ENCODE measurements at regions of chr16 and their contacts with region 1.

Region 1: DNA sequence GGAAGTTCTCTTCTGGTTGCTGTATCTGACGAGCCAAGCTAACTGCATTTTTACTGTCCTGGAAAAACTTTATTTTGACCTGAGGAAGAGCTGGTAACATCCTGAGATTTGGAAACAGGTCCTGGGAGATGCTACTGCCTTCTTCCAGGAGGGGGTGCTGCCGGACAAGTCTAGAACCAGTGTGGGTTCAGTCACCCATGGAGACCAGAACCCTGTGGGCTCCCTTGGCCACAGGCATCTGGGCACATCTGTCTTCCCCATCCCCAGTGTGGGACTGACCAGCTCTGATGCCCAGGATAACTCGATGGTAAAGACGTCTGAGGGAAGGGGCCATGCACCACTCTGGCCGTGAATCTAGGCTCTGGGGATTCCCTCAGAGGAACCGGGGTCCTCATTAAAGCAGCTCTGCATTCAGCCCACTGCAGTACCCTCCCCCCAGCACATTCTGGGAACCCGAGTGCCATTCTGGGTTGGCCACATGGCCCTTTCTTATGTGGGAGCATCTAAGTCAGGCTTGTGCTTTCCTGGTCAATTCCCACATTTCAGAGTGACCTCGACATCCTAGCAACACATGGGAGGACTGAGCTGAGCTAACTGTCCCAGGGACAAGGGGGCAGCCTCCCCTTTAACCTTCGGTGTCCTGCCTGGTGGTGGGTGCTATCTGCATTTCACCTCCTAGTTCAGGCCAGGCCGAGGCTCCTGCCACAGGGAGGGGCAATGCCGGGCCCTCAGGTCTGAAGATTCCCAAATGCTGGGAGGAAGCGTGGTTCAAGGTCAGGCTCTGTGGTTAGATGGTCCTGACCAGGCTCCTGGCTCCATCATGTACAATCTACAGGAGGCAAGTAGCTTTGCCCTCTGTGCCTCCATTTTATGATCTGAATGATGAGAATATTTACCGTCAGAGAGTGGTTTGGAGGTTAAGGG is 6.4 kb downstream of the C16orf86 start:
- DNase-seq: peak in 5 of 9 donors; percentile 36 to 59 (median 45)
- ATAC-seq: peak; percentile 42
- H3K4me3 ChIP-seq: no peak overlapping the region
- H3K4me3 Mint-ChIP-seq: no peak overlapping the region
- H3K27ac ChIP-seq: no peak overlapping the region
- H3K27ac Mint-ChIP-seq: peak overlapping the region in 4 of 9 donors; percentile 41 to 62 (median 51)
- H3K4me1 ChIP-seq: peaks cover 0 to 2% of the 10 kb centered on the region in 2 donors
- H3K4me1 Mint-ChIP-seq: peaks cover 1 to 14% (median 2%) of the 10 kb centered on the region in 7 donors
- H3K27me3 ChIP-seq: no peaks in the 10 kb centered on the region
- H3K27me3 Mint-ChIP-seq: no peaks in the 10 kb centered on the region

Region 2: DNA sequence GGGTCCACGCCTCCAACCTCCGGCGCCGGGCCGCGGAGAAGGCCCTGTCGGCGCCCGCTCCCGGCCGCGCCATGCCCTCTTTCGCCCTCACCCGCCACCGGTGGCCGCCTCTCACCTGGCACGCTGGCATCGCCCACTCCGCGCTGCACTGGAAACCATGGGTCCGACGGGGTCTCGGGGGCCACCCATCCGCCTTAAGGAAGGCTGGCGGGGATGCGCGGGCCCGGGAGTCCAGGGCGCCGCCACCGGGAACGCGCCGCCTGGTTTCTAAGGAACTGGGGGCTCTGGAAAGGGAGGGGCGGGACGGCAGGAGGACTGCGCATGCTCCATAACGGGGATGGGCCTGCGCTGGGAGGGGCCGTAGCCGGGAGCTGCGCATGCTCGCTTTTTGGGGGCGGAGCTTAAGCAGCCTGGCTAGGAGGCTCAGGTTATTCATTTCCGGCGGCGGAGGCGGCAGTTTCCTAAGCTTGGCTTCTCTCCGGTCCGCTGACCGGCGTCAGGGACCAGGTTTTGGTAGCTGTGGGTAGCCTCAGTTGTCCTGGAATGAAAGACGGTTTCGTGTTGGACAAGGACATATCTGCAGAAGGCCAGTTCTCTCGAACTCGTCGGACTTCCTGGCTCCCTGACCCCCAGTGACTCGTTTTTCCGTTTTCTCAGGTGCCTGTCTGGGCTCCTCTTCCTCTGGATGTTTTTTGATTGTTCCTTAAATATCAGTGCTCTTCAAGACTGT is 46.2 kb after region 1 on chr16 and contains the start of gene GFOD2:
- CTCF ChIA-PET with region 1: interaction called, 4 read pairs
- POLR2A ChIA-PET with region 1: interaction called, 5 read pairs
- intact Hi-C with region 1: loop called in 1 of 2 experiments (anchors 2 kb)
- DNase-seq: peak; percentile 94 to 100 (median 96)
- ATAC-seq: peak; percentile 96
- H3K4me3 ChIP-seq: peak within 1 kb of the TSS; percentile 95
- H3K4me3 Mint-ChIP-seq: peak within 1 kb of the TSS; percentile 90 to 99 (median 94)
- H3K27ac ChIP-seq: peak within 1 kb of the TSS; percentile 88
- H3K27ac Mint-ChIP-seq: peak within 1 kb of the TSS; percentile 91 to 99 (median 98)
- H3K4me1 ChIP-seq: peaks cover 15 to 16% of the 10 kb centered on the region in 2 donors
- H3K4me1 Mint-ChIP-seq: peaks cover 19 to 51% (median 39%) of the 10 kb centered on the region in 7 donors
- H3K27me3 ChIP-seq: no peaks in the 10 kb centered on the region
- H3K27me3 Mint-ChIP-seq: no peaks in the 10 kb centered on the region
- total RNA-seq, gene GFOD2: 6.3 to 13.4 (median 11.4) TPM

Region 3: GRCh38 chr16:67865316-67865715 is 192.3 kb after region 1 on chr16:
- CTCF ChIA-PET with region 1: no interaction called
- POLR2A ChIA-PET with region 1: no interaction called
- intact Hi-C with region 1: loop called (anchors 1 to 2 kb)
- DNase-seq: peak in 2 of 9 donors; percentile 18 to 19
- ATAC-seq: peak; percentile 64
- H3K4me3 ChIP-seq: no peak overlapping the region
- H3K4me3 Mint-ChIP-seq: no peak overlapping the region
- H3K27ac ChIP-seq: no peak overlapping the region
- H3K27ac Mint-ChIP-seq: peak overlapping the region in 1 of 9 donors; percentile 65
- H3K4me1 ChIP-seq: no peaks in the 10 kb centered on the region
- H3K4me1 Mint-ChIP-seq: peaks cover 4 to 16% (median 8%) of the 10 kb centered on the region in 7 donors
- H3K27me3 ChIP-seq: no peaks in the 10 kb centered on the region
- H3K27me3 Mint-ChIP-seq: no peaks in the 10 kb centered on the region

Region 4: GRCh38 chr16:67928561-67929364 is 255.8 kb after region 1 on chr16:
- CTCF ChIA-PET with region 1: no interaction called
- POLR2A ChIA-PET with region 1: no interaction called
- intact Hi-C with region 1: loop called in 1 of 2 experiments (anchors 1 kb)
- DNase-seq: peak; percentile 53 to 77 (median 73)
- ATAC-seq: peak; percentile 86
- H3K4me3 ChIP-seq: no peak overlapping the region
- H3K4me3 Mint-ChIP-seq: peak overlapping the region in 1 of 10 donors; percentile 45
- H3K27ac ChIP-seq: no peak overlapping the region
- H3K27ac Mint-ChIP-seq: peak overlapping the region in 4 of 9 donors; percentile 6 to 67 (median 56)
- H3K4me1 ChIP-seq: no peaks in the 10 kb centered on the region
- H3K4me1 Mint-ChIP-seq: peaks cover 0 to 10% (median 7%) of the 10 kb centered on the region in 7 donors
- H3K27me3 ChIP-seq: no peaks in the 10 kb centered on the region
- H3K27me3 Mint-ChIP-seq: no peaks in the 10 kb centered on the region

Region 5: GRCh38 chr16:68040507-68041288 is 367.7 kb after region 1 on chr16:
- CTCF ChIA-PET with region 1: no interaction called
- POLR2A ChIA-PET with region 1: no interaction called
- intact Hi-C with region 1: loop called (anchors 1 to 10 kb)
- DNase-seq: peak; percentile 81 to 95 (median 87)
- ATAC-seq: peak; percentile 100
- H3K4me3 ChIP-seq: no peak overlapping the region
- H3K4me3 Mint-ChIP-seq: peak overlapping the region in 1 of 10 donors; percentile 9
- H3K27ac ChIP-seq: peak overlapping the region; percentile 26
- H3K27ac Mint-ChIP-seq: peak overlapping the region; percentile 28 to 87 (median 61)
- H3K4me1 ChIP-seq: peaks cover 4 to 5% of the 10 kb centered on the region in 2 donors
- H3K4me1 Mint-ChIP-seq: peaks cover 5 to 26% (median 18%) of the 10 kb centered on the region in 7 donors
- H3K27me3 ChIP-seq: no peaks in the 10 kb centered on the region
- H3K27me3 Mint-ChIP-seq: no peaks in the 10 kb centered on the region

Region 6: GRCh38 chr16:68064791-68065365 is 391.9 kb after region 1 on chr16:
- CTCF ChIA-PET with region 1: interaction called, 3 read pairs
- POLR2A ChIA-PET with region 1: no interaction called
- intact Hi-C with region 1: loop called in 1 of 2 experiments (anchors 1 kb)
- DNase-seq: peak; percentile 45 to 72 (median 65)
- ATAC-seq: peak; percentile 84
- H3K4me3 ChIP-seq: no peak overlapping the region
- H3K4me3 Mint-ChIP-seq: peak overlapping the region; percentile 3 to 69 (median 34)
- H3K27ac ChIP-seq: peak overlapping the region; percentile 52
- H3K27ac Mint-ChIP-seq: peak overlapping the region; percentile 65 to 90 (median 83)
- H3K4me1 ChIP-seq: peaks cover 56 to 67% of the 10 kb centered on the region in 2 donors
- H3K4me1 Mint-ChIP-seq: peaks cover 60 to 86% (median 76%) of the 10 kb centered on the region in 7 donors
- H3K27me3 ChIP-seq: no peaks in the 10 kb centered on the region
- H3K27me3 Mint-ChIP-seq: no peaks in the 10 kb centered on the region

Measured in naive thymus-derived CD4-positive, alpha-beta T cell (primary cell).